ENCODE measurements at regions of chr5 and their contacts with region 1.

Region 1: DNA sequence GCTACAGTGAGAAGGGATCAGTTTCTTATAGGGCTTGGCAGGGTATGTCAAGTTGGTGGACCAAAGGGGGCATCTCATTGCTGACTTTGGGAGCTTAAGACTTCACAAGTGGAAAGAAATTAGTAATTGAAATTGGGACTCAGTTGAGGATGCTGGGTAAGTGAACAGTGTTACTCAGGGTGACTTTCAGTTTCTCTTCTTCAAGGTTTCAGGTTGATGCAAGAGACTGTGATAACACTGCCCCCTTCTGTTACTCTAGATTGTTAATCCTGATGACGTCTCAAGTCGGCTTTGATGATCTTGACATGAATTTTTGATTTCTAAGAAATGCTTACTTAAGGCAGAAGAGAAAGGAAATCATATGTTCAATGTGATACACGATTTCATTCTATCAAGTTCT is 21.3 kb downstream of the KCTD16 start:
- DNase-seq: peak; percentile 86
- ATAC-seq: peak; percentile 76
- H3K4me3 ChIP-seq: peak overlapping the region in 2 of 5 experiments; percentile 8 to 19
- H3K4me3 Mint-ChIP-seq: no peak overlapping the region
- H3K27ac ChIP-seq: peak overlapping the region; percentile 54 to 70
- H3K27ac Mint-ChIP-seq: no peak overlapping the region
- H3K4me1 ChIP-seq: peaks cover 46% of the 10 kb centered on the region in 2 donors
- H3K4me1 Mint-ChIP-seq: peaks cover 40% of the 10 kb centered on the region
- H3K27me3 ChIP-seq: no peaks in the 10 kb centered on the region
- H3K27me3 Mint-ChIP-seq: no peaks in the 10 kb centered on the region
- CTCF ChIP-seq: peak; percentile 84

Region 2: GRCh38 chr5:144170276-144171024 is 21.5 kb before region 1 on chr5 and contains the starts of genes KCTD16 and YIPF5:
- CTCF ChIA-PET with region 1: interaction called, 56 read pairs
- POLR2A ChIA-PET with region 1: interaction called, 3 read pairs
- intact Hi-C with region 1: loop called (anchors 1 kb)
- DNase-seq: peak; percentile 98
- ATAC-seq: peak; percentile 98
- H3K4me3 ChIP-seq: peak within 1 kb of the TSS; percentile 69 to 92 (median 71)
- H3K4me3 Mint-ChIP-seq: peak within 1 kb of the TSS; percentile 93
- H3K27ac ChIP-seq: peak within 1 kb of the TSS; percentile 61 to 85
- H3K27ac Mint-ChIP-seq: peak within 1 kb of the TSS; percentile 97
- H3K4me1 ChIP-seq: peaks cover 13 to 15% of the 10 kb centered on the region in 2 donors
- H3K4me1 Mint-ChIP-seq: peaks cover 30% of the 10 kb centered on the region
- H3K27me3 ChIP-seq: no peaks in the 10 kb centered on the region
- H3K27me3 Mint-ChIP-seq: peaks cover 6% of the 10 kb centered on the region
- CTCF ChIP-seq: no peak
- total RNA-seq, gene KCTD16: 0.17 TPM in 1 of 2 replicates, not detected in the other
- total RNA-seq, gene YIPF5: 24.0 and 24.3 TPM in 2 replicates

Region 3: GRCh38 chr5:144203750-144204596 is 12.0 kb after region 1 on chr5:
- CTCF ChIA-PET with region 1: interaction called, 32 read pairs
- POLR2A ChIA-PET with region 1: no interaction called
- intact Hi-C with region 1: no loop called
- DNase-seq: peak; percentile 72
- ATAC-seq: peak; percentile 67
- H3K4me3 ChIP-seq: no peak overlapping the region
- H3K4me3 Mint-ChIP-seq: no peak overlapping the region
- H3K27ac ChIP-seq: no peak overlapping the region
- H3K27ac Mint-ChIP-seq: no peak overlapping the region
- H3K4me1 ChIP-seq: no peaks in the 10 kb centered on the region
- H3K4me1 Mint-ChIP-seq: no peaks in the 10 kb centered on the region
- H3K27me3 ChIP-seq: peaks cover 0 to 25% (median 17%) of the 10 kb centered on the region in 4 experiments
- H3K27me3 Mint-ChIP-seq: peaks cover 70% of the 10 kb centered on the region
- CTCF ChIP-seq: peak; percentile 95

Region 4: DNA sequence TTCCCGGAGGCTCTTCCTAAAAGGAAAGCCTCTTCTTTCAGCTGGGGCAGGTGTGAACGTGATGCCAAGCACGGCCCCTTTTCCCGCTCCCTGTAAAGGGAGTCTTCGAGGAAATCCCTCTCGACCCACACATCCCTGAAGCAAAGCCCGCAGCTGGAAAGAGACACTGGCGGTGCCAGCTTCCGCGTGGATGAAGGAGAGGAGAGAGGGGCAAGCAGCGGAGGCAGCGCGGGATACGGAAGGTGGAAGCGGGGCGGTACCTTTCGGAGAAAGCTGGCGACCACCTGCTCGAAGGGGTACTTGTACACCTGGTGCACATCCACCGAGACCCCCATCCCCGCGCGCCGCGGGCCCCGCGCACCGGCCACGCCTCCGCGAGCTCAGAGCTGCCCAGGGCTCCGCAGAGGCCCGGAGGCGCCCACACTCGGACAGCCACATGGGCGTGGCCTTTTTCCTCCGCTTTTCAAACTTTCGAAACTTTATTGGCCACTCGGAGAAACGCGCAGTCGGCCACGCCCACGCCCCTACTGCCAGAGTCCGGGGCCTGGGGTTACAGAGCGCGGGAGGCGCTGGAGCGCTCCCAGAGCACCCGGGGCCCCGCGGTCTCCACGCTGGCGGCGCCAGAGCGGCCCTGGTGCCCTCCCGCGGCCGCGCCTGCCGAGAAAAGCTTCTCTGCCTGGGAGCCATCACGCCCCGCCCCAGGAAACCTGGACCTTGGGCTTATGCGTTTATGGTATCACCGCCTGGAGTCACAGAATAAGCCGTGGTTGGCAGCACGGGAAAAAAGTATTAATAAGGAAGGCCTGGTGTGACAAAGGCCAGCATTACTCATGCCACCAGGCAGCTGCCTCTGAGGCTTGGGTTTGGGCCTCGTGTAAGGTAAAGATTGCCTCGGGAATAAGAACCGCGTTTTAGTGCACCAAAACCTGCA is 1643.2 kb after region 1 on chr5 and contains the start of gene PRELID2:
- CTCF ChIA-PET with region 1: no interaction called
- POLR2A ChIA-PET with region 1: no interaction called
- intact Hi-C with region 1: loop called (anchors 5 kb)
- DNase-seq: peak; percentile 74
- ATAC-seq: peak; percentile 87
- H3K4me3 ChIP-seq: peak within 1 kb of the TSS; percentile 17 to 80 (median 63)
- H3K4me3 Mint-ChIP-seq: peak within 1 kb of the TSS; percentile 80
- H3K27ac ChIP-seq: no peak within 1 kb of the TSS
- H3K27ac Mint-ChIP-seq: no peak within 1 kb of the TSS
- H3K4me1 ChIP-seq: peaks cover 9 to 17% of the 10 kb centered on the region in 2 donors
- H3K4me1 Mint-ChIP-seq: peaks cover 16% of the 10 kb centered on the region
- H3K27me3 ChIP-seq: no peaks in the 10 kb centered on the region
- H3K27me3 Mint-ChIP-seq: peaks cover 6% of the 10 kb centered on the region
- CTCF ChIP-seq: no peak
- total RNA-seq, gene PRELID2: 2.7 and 3.4 TPM in 2 replicates